Naive thymus-derived CD4-positive, alpha-beta T cell (primary cell): ENCODE measurements at regions of chr5 and their contacts with region 1.

Region 1: GRCh38 chr5:2746561-2747032 is 4.9 kb downstream of the IRX2 start:
- DNase-seq: no peak
- ATAC-seq: no peak
- H3K4me3 ChIP-seq: no peak overlapping the region
- H3K4me3 Mint-ChIP-seq: no peak overlapping the region
- H3K27ac ChIP-seq: no peak overlapping the region
- H3K27ac Mint-ChIP-seq: no peak overlapping the region
- H3K4me1 ChIP-seq: no peaks in the 10 kb centered on the region
- H3K4me1 Mint-ChIP-seq: peaks cover 0 to 8% (median 0%) of the 10 kb centered on the region in 7 donors
- H3K27me3 ChIP-seq: peaks cover 0 to 5% of the 10 kb centered on the region in 2 donors
- H3K27me3 Mint-ChIP-seq: peaks cover 62 to 69% (median 65%) of the 10 kb centered on the region in 5 donors

Region 2: DNA sequence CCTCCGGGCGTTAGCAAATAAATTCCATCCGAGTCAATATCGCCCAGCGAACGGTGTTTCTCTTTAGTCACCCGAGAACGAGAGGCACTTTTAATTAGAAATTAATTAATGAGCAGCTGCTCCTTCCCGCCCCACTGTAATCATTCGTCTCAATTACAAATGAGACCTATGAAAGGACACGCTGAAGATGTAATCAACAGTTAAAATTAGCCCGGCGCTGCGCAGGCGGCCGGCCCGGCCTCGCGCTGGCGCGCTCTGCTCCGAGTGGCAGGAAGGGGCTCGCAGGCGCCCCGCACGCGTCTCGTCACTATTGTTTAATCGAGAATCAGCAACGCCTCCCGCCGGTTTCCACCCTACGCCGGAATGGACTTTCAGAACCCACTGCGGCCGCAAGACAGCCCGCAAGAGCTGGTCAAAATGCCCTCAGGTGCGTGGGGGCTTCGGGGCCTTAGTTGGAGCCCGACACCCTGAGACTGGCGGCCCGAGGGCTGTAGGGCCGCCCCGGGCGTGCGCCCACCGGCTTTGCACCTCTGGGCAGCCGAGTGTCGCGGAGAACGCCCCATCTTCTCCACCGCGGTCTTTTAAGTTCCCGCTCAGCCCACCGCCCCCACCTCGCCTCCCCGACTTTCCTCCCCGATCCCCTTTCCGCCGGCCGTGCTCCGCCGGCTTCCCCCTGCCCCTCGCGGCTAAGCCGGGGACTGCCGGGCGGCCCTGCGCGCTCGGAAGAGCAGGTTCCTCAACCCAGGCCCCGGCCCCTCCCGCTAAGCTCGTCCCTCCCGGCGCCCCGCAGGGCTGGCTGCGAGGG is 863.3 kb before region 1 on chr5:
- CTCF ChIA-PET with region 1: no interaction called
- POLR2A ChIA-PET with region 1: no interaction called
- intact Hi-C with region 1: loop called in 1 of 2 experiments (anchors 5 kb)
- DNase-seq: no peak
- ATAC-seq: no peak
- H3K4me3 ChIP-seq: no peak overlapping the region
- H3K4me3 Mint-ChIP-seq: peak overlapping the region in 5 of 10 donors; percentile 25 to 63 (median 33)
- H3K27ac ChIP-seq: no peak overlapping the region
- H3K27ac Mint-ChIP-seq: no peak overlapping the region
- H3K4me1 ChIP-seq: no peaks in the 10 kb centered on the region
- H3K4me1 Mint-ChIP-seq: peaks cover 0 to 11% (median 7%) of the 10 kb centered on the region in 7 donors
- H3K27me3 ChIP-seq: no peaks in the 10 kb centered on the region
- H3K27me3 Mint-ChIP-seq: peaks cover 35 to 57% (median 45%) of the 10 kb centered on the region in 5 donors

Region 3: DNA sequence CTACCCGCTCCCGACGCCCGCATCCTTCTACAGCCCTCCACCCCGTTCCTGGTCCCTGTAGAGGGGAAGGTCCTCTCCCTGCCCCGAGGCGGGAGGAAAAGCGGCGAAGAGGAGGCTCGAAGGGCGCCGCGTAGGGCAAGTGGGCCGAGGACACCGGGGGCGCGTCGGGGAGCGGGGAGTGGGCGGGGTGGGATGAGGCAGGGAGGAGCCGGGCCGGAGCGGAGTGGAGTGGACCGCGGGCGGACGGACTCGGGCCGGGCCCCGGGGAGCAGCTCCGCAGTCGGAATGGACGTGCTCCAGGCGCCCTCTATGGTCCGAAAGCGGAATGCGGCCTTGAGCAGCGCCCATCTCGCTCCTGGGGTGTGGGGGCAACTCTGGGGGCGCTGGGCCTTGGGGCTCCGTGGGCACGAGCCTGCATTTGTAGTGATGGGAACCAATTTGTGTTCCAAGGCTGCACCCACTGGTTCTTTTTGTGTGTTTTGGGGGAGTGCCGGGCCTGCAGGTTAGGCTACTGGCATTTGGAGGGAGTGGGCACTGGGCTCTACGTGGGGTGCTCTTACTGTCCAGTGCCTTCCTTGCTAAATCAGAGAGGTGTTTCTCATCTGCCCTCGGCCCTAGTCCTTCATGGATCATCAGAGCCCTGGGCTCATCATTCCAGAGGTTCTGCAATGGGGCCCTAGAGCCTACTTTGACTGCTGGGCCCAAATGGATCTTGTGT is 856.3 kb after region 1 on chr5:
- CTCF ChIA-PET with region 1: no interaction called
- POLR2A ChIA-PET with region 1: no interaction called
- intact Hi-C with region 1: loop called in 1 of 2 experiments (anchors 5 kb)
- DNase-seq: no peak
- ATAC-seq: no peak
- H3K4me3 ChIP-seq: no peak overlapping the region
- H3K4me3 Mint-ChIP-seq: peak overlapping the region in 3 of 10 donors; percentile 6 to 34 (median 21)
- H3K27ac ChIP-seq: no peak overlapping the region
- H3K27ac Mint-ChIP-seq: no peak overlapping the region
- H3K4me1 ChIP-seq: no peaks in the 10 kb centered on the region
- H3K4me1 Mint-ChIP-seq: peaks cover 0 to 20% (median 14%) of the 10 kb centered on the region in 7 donors
- H3K27me3 ChIP-seq: no peaks in the 10 kb centered on the region
- H3K27me3 Mint-ChIP-seq: peaks cover 63 to 78% (median 72%) of the 10 kb centered on the region in 5 donors